WTC11 (cell line): ENCODE measurements at regions of chr17 and their contacts with region 1.

Region 1: DNA sequence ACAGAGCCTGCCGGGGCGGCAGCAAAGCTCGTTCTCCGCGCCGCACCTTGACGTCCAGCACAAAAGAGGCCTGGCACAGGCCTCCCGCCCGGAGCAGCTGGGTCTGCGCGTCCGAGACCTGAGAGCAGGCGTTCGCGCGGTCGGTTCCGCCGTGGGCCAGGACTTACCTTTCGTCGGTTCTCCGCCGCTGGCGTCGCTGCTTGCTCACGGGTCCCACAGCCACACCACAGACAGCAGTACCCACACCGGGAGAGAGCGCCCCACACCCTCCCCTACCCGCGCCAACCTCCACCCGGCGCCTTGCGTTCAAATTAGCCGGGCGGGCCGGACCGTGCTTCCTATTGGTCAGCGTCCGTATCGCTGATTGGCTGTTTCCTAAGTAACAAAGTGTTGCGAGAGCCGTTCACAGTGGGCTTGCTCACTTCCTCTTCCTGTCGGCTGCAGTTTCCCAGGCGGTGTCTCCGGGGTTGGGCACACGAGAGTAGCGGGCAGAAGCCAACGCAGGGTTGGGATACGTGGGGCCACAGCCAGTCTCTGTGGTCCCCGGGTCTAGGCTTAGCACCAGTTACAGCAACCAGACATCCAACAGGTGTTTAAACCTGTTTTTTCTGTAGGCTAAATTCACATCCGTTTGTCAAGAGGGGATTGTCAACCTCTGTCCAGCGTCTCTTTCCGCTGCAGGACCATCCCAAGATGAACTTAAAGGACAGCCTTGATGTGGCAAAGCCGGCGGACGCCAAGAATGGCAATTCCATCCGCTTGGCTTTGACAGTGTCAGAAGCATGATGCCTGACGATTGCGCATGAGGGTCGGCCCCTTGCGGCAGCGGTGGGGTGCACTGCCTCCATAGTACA is at the start of gene KIF18B:
- DNase-seq: peak; percentile 89
- ATAC-seq: peak; percentile 95
- H3K4me3 Mint-ChIP-seq: peak within 1 kb of the TSS; percentile 95
- H3K27ac Mint-ChIP-seq: peak within 1 kb of the TSS; percentile 57; the same call in 1 of the 2 replicates
- H3K4me1 Mint-ChIP-seq: peaks cover 13% of the 10 kb centered on the region
- H3K27me3 Mint-ChIP-seq: no peaks in the 10 kb centered on the region; the same call in 1 of the 2 replicates
- CTCF ChIP-seq: no peak
- total RNA-seq, gene KIF18B: 62.2 to 82.2 TPM (median 66.3 TPM) in 3 replicates

Region 2: GRCh38 chr17:44864866-44865660 is 82.6 kb before region 1 on chr17:
- CTCF ChIA-PET with region 1: no interaction called
- POLR2A ChIA-PET with region 1: no interaction called
- DNase-seq: peak; percentile 70
- ATAC-seq: peak; percentile 87
- H3K4me3 Mint-ChIP-seq: no peak overlapping the region
- H3K27ac Mint-ChIP-seq: no peak overlapping the region
- H3K4me1 Mint-ChIP-seq: no peaks in the 10 kb centered on the region
- H3K27me3 Mint-ChIP-seq: no peaks in the 10 kb centered on the region
- CTCF ChIP-seq: peak; percentile 88

Region 3: DNA sequence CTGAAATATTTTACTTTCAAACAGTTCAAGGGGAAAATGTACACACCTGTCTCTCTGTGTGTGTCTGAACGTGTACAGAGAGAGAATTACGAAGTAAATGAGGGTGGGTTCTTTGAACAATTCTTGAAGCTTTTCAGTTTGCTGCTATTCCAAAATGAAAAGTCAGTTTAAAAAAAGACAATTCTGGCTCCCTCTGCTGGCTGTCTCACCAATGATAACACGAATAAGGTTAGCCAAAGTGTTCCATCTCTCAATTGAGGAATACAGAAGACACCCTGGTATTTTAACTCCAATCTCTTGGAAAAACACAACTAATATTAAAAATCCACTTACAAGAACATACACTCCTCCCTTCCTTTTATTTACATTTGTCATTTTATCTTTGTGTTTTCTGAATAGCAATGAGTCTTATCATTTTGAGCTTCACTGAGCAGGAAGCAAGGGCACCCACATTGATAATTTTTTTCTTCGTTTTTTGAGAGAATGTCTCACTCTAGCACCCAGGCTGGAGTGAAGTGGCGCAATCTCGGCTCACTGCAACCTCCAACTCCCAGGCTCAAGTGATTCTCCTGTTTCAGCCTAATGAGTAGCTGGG is 69.0 kb before region 1 on chr17:
- CTCF ChIA-PET with region 1: no interaction called
- POLR2A ChIA-PET with region 1: no interaction called
- DNase-seq: no peak
- ATAC-seq: no peak
- H3K4me3 Mint-ChIP-seq: no peak overlapping the region
- H3K27ac Mint-ChIP-seq: no peak overlapping the region
- H3K4me1 Mint-ChIP-seq: no peaks in the 10 kb centered on the region
- H3K27me3 Mint-ChIP-seq: no peaks in the 10 kb centered on the region
- CTCF ChIP-seq: no peak

Region 4: GRCh38 chr17:44961921-44962350 is 14.2 kb after region 1 on chr17:
- CTCF ChIA-PET with region 1: interaction called, 11 read pairs
- POLR2A ChIA-PET with region 1: interaction called, 6 read pairs
- DNase-seq: peak; percentile 54
- ATAC-seq: peak; percentile 85
- H3K4me3 Mint-ChIP-seq: no peak overlapping the region
- H3K27ac Mint-ChIP-seq: no peak overlapping the region
- H3K4me1 Mint-ChIP-seq: peaks cover 12% of the 10 kb centered on the region
- H3K27me3 Mint-ChIP-seq: peaks cover 58% of the 10 kb centered on the region
- CTCF ChIP-seq: no peak

Region 5: GRCh38 chr17:45060797-45061605 is 113.3 kb after region 1 on chr17 and contains the start of gene NMT1:
- CTCF ChIA-PET with region 1: interaction called, 3 read pairs
- POLR2A ChIA-PET with region 1: interaction called, 10 read pairs
- DNase-seq: peak; percentile 98
- ATAC-seq: peak; percentile 96
- H3K4me3 Mint-ChIP-seq: peak within 1 kb of the TSS; percentile 99
- H3K27ac Mint-ChIP-seq: peak within 1 kb of the TSS; percentile 100
- H3K4me1 Mint-ChIP-seq: peaks cover 4% of the 10 kb centered on the region
- H3K27me3 Mint-ChIP-seq: no peaks in the 10 kb centered on the region
- CTCF ChIP-seq: no peak
- total RNA-seq, gene NMT1: 152 to 162 TPM (median 153 TPM) in 3 replicates

Region 6: DNA sequence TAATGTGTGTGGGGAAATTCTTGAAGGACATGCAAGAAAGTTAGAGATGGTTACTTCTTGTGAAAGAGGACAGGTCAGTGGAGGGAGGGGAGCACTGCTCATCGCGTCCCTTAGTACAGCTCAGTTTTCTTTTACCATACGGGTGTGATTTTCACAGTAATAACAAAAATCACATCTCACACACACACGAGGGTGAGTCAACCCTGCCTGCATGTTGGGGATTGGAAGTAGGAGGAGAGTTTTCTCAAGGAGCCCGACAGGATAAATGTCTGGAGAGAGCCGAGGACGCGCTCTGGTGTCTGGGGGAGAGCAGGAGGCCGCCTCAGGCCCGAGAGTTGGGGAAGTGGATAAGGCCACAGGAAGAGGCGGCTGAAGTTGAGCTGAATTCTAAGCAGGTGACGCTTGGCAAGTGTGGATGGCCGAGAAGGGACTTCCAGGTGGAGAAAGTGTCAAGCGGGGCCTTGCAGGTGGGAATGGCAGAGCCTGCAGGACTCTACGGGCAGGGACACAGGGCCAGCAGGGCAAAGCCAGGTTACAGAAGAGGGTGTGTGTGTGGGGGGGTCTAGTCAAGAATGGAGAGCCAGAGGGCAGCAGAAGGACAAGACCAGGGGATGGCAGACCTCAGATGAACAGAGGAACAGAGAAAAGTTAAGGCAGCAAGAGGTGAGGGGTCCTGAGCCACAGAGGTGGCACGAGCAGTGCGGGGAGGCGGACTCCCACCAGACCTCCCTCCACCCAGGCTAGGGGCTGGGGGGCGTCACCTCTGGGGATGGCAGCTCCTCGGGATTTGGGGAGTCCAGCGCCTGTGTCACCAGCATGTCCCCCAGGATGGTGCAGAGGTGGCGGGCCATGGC is 168.4 kb after region 1 on chr17:
- CTCF ChIA-PET with region 1: no interaction called
- POLR2A ChIA-PET with region 1: no interaction called
- DNase-seq: no peak
- ATAC-seq: no peak
- H3K4me3 Mint-ChIP-seq: no peak overlapping the region
- H3K27ac Mint-ChIP-seq: peak overlapping the region; percentile 66; the same call in 1 of the 2 replicates
- H3K4me1 Mint-ChIP-seq: peaks cover 14% of the 10 kb centered on the region
- H3K27me3 Mint-ChIP-seq: no peaks in the 10 kb centered on the region
- CTCF ChIP-seq: no peak